Vagina (tissue), 2 donors: ENCODE measurements at regions of chr10 and their contacts with region 1.

Region 1: DNA sequence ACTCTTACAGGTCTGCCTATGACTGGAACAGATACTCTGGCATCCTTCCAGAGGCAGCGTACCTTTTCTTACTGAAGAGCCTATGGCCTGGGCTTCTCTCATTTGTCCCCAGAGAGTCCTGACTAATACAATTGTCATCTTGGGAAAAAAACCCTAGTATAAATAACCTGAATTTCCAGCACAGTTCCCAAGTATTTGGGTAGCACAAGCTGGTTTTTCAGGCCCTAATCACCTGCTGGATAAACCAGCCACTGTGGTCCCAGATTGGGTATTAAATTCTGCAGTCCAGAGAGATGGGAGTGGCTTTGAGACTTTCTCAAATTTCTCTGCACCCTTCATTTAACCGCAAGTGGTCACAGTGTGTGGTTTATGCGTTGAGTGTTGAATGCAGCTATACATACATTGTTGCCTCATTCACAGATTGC is 186.8 kb upstream of the NEBL start:
- DNase-seq: no peak
- H3K4me3 ChIP-seq: no peak overlapping the region
- H3K27ac ChIP-seq: no peak overlapping the region
- H3K4me1 ChIP-seq: no peaks in the 10 kb centered on the region
- H3K27me3 ChIP-seq: no peaks in the 10 kb centered on the region
- CTCF ChIP-seq: no peak
- POLR2A ChIP-seq: no peak

Region 2: DNA sequence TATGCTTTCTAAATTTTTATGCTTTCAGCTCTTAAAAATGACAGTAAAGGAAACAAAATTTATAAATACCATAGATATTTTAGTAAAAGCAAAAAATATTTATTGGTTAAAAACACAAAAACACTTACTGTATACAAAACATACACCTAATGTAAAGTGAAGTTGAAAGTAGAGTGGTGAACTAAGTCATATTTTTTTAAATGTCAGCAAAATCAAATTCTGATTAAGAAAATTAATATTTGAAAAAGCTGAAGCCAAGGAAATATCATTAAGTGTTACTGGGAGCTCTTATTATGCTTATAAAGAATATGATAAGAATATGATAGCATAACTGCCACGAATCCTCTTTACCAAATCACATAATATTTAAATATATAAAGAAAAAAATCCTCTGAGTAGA is 1332.9 kb before region 1 on chr10:
- intact Hi-C with region 1: loop called (anchors 5 kb)
- DNase-seq: no peak
- H3K4me3 ChIP-seq: no peak overlapping the region
- H3K27ac ChIP-seq: no peak overlapping the region
- H3K4me1 ChIP-seq: no peaks in the 10 kb centered on the region
- H3K27me3 ChIP-seq: no peaks in the 10 kb centered on the region
- CTCF ChIP-seq: no peak
- POLR2A ChIP-seq: no peak

Region 3: DNA sequence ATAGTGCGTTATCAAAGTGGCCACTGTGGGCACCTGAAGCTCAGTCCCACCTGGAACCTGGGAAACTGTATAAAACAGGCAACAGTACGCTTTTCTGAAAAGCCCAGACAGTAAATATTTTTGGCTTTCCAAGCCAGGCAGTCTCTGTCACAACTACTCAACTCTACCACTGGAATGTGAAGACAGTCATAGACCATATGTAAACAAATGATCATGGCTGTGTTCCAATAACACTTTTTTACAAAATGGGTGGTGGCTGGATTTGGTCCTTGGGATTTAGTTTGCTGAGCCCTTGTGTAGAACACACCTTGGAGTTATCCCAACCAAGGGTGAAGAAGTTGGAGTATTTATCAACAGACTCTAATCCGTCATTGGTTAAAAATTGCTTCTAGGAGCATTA is 181.7 kb after region 1 on chr10:
- intact Hi-C with region 1: loop called (anchors 10 kb)
- DNase-seq: no peak
- H3K4me3 ChIP-seq: no peak overlapping the region
- H3K27ac ChIP-seq: no peak overlapping the region
- H3K4me1 ChIP-seq: peaks cover 7% of the 10 kb centered on the region
- H3K27me3 ChIP-seq: no peaks in the 10 kb centered on the region
- CTCF ChIP-seq: no peak
- POLR2A ChIP-seq: no peak

Region 4: DNA sequence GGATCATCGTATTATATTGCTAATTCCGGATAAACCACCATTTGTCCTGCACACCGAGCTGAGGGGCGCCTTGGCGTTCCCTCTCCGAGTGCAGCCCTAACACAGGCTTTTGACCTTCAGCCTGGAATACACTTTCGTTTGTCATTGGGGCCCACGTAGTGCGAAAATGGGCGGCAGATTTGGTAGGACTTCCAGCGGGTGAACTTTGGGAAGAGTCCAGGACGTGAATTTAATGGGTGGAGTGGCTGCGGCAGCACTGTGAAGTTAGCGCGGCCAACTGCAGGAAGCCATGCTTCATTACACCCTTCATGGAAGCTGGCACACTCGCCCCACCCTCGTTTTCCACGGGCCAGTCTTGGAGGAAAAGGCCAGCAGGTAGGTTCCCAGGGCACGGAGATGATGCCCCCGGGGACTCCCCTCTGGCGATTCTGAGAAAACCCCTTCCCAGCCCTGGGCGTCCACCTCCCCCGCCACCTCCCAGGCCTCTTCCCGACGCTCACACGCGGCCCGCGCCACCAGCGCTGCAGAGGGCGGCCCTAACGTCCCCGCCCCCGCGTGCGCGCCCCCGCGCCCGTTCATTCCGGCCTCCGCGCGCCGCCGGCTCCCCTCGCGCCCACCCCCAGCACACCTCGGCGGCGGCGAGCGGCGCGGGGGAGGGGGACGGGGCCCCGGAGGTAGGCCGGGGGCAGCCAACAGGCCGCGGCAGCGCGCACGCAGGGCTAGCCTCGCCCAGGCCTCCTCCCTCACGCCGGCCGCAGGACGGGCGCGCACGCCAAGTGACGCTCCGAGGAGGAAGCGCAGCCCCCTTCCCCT is 449.8 kb after region 1 on chr10 and contains the start of gene MLLT10:
- intact Hi-C with region 1: no loop called
- DNase-seq: peak in 1 of 2 donors; percentile 93
- H3K4me3 ChIP-seq: peak within 1 kb of the TSS; percentile 96 to 97
- H3K27ac ChIP-seq: peak within 1 kb of the TSS; percentile 96
- H3K4me1 ChIP-seq: peaks cover 40% of the 10 kb centered on the region
- H3K27me3 ChIP-seq: no peaks in the 10 kb centered on the region
- CTCF ChIP-seq: peak in 2 of 3 experiments; percentile 3 to 37
- POLR2A ChIP-seq: peak in 1 of 2 donors; percentile 86
- total RNA-seq, gene MLLT10: 53.3 TPM